HEK293T (cell line): ENCODE measurements at regions of chr13 and their contacts with region 1.

Region 1: GRCh38 chr13:78978381-78978998 is 319.5 kb upstream of the OBI1 start:
- DNase-seq: peak; percentile 81

Region 2: GRCh38 chr13:78875792-78876580 is 102.5 kb before region 1 on chr13:
- CTCF ChIA-PET with region 1: interaction called, 11 read pairs
- POLR2A ChIA-PET with region 1: no interaction called
- DNase-seq: peak; percentile 48

Region 3: GRCh38 chr13:79423801-79424642 is 445.5 kb after region 1 on chr13:
- CTCF ChIA-PET with region 1: no interaction called
- POLR2A ChIA-PET with region 1: no interaction called
- DNase-seq: peak; percentile 60